Dorsolateral prefrontal cortex (tissue), 120 donors: ENCODE measurements at regions of chr16 and their contacts with region 1.

Region 1: DNA sequence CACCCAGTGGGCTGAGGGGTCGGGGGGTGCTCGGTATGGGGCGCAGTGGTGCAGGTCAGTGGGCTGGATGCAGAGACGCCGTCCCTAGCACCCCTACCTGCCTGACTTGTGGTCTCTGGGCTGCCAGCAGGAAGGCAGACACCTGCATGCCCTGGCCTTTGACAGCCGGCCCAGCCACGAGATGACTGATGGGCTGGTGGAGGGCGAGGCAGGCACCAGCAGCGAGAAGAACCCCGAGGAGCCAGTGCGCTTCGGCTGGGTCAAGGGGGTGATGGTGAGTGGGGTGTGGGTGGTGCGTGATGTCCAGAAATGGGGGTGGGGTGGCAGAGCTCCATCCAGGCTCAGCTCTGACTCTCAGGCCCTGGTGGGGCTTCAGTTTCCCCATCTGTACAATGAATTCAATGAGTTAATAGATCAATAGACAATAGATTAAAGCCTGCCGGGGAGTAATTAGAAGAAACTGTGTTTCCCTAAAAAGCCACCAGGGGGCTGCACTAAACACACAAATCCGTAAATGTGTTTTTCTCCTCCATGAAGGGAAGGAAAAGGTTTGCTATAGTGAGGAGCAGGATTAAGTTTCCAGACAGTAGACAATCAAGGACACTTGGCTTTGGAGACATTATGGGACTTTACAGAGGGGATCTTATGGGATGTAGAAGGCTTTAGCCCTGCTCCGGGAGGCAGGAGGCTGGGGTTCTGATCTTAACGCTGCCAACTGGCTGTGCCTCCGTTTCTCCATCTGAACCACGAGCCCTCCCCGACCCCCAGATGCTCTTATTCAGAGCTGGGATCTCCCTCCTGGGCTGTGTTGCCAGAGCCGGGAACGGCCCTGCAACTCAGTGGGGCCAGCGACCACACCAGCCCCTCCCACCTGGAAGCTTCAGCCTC is 2.2 kb downstream of the SLC12A3 start:
- DNase-seq: no peak
- H3K4me3 ChIP-seq: peak overlapping the region in 3 of 59 donors; percentile 6 to 33 (median 24)
- H3K27ac ChIP-seq: peak overlapping the region in 1 of 59 donors; percentile 2
- H3K27me3 ChIP-seq: no peaks in the 10 kb centered on the region
- CTCF ChIP-seq: peak; percentile 65 to 91 (median 81)

Region 2: GRCh38 chr16:56911771-56912571 is 44.8 kb after region 1 on chr16:
- intact Hi-C with region 1: loop called in 1 of 2 experiments (anchors 5 kb)
- DNase-seq: peak in 1 of 10 donors; percentile 17
- H3K4me3 ChIP-seq: no peak overlapping the region
- H3K27ac ChIP-seq: peak overlapping the region in 46 of 59 donors; percentile 10 to 84 (median 62)
- H3K27me3 ChIP-seq: no peaks in the 10 kb centered on the region
- CTCF ChIP-seq: no peak

Region 3: DNA sequence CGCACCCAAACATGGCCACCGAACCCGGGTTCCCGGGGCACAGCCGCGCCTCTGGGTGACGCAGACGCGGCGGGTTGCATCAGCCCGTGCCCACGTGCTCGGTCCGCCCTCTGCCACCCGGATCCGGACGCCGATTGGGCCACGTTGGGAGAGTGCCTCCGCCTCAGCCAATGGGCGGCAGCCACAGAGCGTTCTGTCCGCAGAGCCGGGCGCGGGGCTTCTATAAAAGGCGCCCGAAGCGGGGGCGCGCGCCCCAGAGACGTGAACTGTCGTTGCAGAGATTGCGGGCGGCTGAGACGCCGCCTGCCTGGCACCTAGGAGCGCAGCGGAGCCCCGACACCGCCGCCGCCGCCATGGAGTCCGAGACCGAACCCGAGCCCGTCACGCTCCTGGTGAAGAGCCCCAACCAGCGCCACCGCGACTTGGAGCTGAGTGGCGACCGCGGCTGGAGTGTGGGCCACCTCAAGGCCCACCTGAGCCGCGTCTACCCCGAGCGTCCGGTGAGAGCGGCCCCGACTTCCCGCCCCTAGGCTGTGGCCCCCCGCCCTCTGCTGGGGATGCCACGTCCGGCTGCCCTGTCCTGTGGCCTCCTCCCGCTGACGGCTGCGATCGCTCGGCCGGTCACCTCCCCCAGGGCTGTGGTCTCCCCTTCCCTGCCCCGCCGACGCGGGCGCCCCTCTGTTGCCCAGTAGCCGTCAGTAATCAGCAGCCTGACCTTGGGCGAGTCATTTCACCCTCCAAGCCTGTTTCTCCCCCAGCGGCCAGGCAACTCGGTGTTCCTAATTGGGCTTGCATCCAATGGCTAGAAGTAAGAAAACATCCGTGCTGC is 64.9 kb after region 1 on chr16 and contains the start of gene HERPUD1:
- intact Hi-C with region 1: loop called (anchors 5 to 10 kb)
- DNase-seq: peak; percentile 99 to 100 (median 100)
- H3K4me3 ChIP-seq: peak within 1 kb of the TSS; percentile 70 to 100 (median 98)
- H3K27ac ChIP-seq: peak within 1 kb of the TSS; percentile 90 to 100 (median 98)
- H3K27me3 ChIP-seq: no peaks in the 10 kb centered on the region
- CTCF ChIP-seq: peak in 36 of 56 donors; percentile 10 to 55 (median 35)
- total RNA-seq, gene HERPUD1: 76.8 to 213 (median 118) TPM

Region 4: DNA sequence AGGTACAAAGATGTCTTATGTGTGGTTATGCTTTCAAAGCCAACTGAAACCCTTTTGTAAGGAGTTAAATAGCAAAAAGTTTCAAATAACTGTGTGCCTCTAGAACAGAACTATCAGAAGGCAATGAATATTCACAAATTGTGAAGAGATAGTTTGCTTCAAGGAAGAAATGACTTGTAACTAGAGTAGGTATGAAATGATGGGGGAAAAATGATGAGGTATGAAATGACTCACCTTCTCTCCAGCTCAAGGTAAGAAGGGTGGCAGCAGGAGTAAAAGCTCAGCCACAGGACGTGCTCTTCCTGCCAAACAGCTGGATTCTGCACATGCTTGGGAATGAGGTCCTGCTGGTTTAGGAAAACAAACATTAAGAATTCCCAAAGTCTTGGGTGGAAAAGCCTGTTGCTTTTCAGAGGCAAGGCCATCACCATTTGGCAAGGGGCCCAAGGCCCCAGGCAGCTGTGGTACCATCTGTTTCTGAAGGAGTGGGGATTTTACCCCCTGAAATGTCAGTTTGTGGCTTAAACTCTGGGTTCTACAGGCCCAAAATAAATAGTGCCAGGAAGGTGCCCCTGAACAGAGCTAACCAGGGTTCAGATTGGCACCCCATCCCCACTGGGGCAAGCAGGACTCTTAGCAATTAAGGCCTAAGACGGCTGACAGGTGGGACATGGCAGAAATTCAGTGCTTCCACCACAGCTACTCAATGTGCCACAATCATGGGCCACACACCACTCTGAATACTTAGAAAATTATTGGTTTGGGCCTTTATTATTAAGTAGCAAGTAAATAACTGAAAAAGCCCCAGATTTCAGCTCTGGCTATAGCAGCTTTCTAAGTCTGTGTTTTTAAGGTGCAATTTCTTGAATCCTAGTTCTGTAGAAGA is 78.0 kb after region 1 on chr16:
- intact Hi-C with region 1: loop called in 1 of 2 experiments (anchors 5 kb)
- DNase-seq: no peak
- H3K4me3 ChIP-seq: no peak overlapping the region
- H3K27ac ChIP-seq: peak overlapping the region in 28 of 59 donors; percentile 2 to 59 (median 20)
- H3K27me3 ChIP-seq: no peaks in the 10 kb centered on the region
- CTCF ChIP-seq: no peak

Region 5: GRCh38 chr16:57045694-57046381 is 178.7 kb after region 1 on chr16:
- intact Hi-C with region 1: loop called (anchors 5 to 10 kb)
- DNase-seq: peak; percentile 36 to 80 (median 68)
- H3K4me3 ChIP-seq: peak overlapping the region in 30 of 59 donors; percentile 3 to 56 (median 32)
- H3K27ac ChIP-seq: peak overlapping the region in 4 of 59 donors; percentile 21 to 61 (median 36)
- H3K27me3 ChIP-seq: no peaks in the 10 kb centered on the region
- CTCF ChIP-seq: peak in 54 of 56 donors; percentile 36 to 79 (median 62)

Region 6: GRCh38 chr16:57084257-57084770 is 217.1 kb after region 1 on chr16:
- intact Hi-C with region 1: loop called in 1 of 2 experiments (anchors 10 kb)
- DNase-seq: peak in 9 of 10 donors; percentile 48 to 83 (median 73)
- H3K4me3 ChIP-seq: peak overlapping the region in 1 of 59 donors; percentile 12
- H3K27ac ChIP-seq: peak overlapping the region in 33 of 59 donors; percentile 1 to 76 (median 45)
- H3K27me3 ChIP-seq: no peaks in the 10 kb centered on the region
- CTCF ChIP-seq: peak; percentile 91 to 100 (median 99)

Region 7: DNA sequence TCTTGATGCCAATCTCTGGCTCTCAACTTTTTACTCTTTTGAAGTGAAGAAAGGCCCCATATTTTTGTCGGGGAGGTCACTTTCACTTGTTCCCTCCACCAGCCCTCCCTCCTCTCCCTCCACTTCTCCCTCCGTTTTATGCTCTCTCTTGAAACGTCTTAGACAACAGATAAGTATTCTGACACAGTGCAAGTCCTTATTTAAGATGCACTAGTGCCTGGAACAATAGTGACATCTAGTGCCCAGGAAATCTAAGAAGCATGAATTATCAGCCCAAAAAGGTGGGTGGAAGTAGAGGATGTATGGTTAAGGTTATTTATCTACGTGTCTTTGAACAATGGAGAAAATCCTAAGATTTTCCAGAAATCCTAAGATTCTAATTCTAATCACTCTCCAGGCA is 300.8 kb after region 1 on chr16:
- intact Hi-C with region 1: loop called (anchors 10 kb)
- DNase-seq: no peak
- H3K4me3 ChIP-seq: peak overlapping the region in 9 of 59 donors; percentile 1 to 33 (median 17)
- H3K27ac ChIP-seq: peak overlapping the region in 54 of 59 donors; percentile 24 to 89 (median 78)
- H3K27me3 ChIP-seq: no peaks in the 10 kb centered on the region
- CTCF ChIP-seq: peak; percentile 30 to 91 (median 76)